Dendritic cell treated with granulocyte-macrophage colony-stimulating factor and Interleukin-4, amounts not matched to agents 40 ng/mL and 50 ng/mL, for 4 days (primary cell): ENCODE measurements at regions of chr2 and their contacts with region 1.

Region 1: GRCh38 chr2:85750587-85751575 is 2.9 kb upstream of the ATOH8 start:
- H3K4me3 Mint-ChIP-seq: no peak overlapping the region
- H3K27ac Mint-ChIP-seq: no peak overlapping the region
- H3K4me1 Mint-ChIP-seq: peaks cover 79% of the 10 kb centered on the region
- H3K27me3 Mint-ChIP-seq: peaks cover 82% of the 10 kb centered on the region

Region 2: DNA sequence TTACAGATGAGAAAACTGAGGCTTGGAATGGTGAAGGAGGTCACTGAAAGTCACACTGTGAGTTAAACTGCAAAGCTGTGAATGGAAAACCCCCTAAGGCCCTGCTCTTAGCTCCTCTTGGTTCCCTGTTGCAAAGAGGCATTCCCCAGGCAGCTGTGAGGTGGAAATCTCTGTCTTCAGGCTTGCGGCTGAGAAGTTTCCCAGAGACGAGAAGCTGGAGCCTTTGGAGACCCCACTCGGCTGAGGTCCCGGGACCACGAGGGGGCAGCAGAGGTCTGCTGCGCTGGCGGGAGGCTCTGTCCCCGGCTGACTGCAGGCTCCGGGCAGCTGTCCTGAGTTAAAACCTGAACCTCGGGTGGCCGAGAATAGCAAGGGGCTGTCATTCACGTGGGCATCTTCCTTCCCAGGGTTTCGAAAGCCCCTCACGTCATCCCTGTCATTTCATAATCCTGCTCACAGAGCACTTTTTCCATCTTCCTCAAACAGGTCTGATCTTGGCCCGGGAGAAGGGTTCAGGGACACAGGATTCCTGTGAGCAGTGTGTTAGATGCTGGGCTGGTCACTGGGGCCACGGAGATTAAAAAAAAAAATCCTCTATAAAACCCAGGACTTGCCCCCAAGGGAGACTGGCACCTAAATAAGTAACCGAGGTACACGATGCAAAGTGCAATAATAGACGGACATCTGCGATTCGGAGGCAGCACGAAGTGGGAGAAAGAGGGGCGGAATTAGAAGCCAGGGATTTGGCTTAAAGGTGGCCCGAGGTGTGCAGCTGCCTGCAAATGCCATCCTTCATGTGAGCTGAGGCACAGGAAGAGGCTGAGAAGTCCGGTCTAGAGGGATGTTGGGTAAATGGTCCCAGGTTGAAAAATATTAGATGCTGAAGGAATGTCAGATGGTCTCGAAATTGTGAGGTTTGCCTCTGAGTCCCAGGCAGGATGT is 21.7 kb before region 1 on chr2:
- intact Hi-C with region 1: loop called (anchors 2 kb)
- H3K4me3 Mint-ChIP-seq: no peak overlapping the region
- H3K27ac Mint-ChIP-seq: no peak overlapping the region
- H3K4me1 Mint-ChIP-seq: peaks cover 53% of the 10 kb centered on the region
- H3K27me3 Mint-ChIP-seq: peaks cover 15% of the 10 kb centered on the region

Region 3: GRCh38 chr2:85797921-85798320 is 47.0 kb after region 1 on chr2:
- intact Hi-C with region 1: loop called (anchors 2 kb)
- H3K4me3 Mint-ChIP-seq: no peak overlapping the region
- H3K27ac Mint-ChIP-seq: no peak overlapping the region
- H3K4me1 Mint-ChIP-seq: no peaks in the 10 kb centered on the region
- H3K27me3 Mint-ChIP-seq: peaks cover 28% of the 10 kb centered on the region